ENCODE measurements at regions of chr20 and their contacts with region 1.

Region 1: DNA sequence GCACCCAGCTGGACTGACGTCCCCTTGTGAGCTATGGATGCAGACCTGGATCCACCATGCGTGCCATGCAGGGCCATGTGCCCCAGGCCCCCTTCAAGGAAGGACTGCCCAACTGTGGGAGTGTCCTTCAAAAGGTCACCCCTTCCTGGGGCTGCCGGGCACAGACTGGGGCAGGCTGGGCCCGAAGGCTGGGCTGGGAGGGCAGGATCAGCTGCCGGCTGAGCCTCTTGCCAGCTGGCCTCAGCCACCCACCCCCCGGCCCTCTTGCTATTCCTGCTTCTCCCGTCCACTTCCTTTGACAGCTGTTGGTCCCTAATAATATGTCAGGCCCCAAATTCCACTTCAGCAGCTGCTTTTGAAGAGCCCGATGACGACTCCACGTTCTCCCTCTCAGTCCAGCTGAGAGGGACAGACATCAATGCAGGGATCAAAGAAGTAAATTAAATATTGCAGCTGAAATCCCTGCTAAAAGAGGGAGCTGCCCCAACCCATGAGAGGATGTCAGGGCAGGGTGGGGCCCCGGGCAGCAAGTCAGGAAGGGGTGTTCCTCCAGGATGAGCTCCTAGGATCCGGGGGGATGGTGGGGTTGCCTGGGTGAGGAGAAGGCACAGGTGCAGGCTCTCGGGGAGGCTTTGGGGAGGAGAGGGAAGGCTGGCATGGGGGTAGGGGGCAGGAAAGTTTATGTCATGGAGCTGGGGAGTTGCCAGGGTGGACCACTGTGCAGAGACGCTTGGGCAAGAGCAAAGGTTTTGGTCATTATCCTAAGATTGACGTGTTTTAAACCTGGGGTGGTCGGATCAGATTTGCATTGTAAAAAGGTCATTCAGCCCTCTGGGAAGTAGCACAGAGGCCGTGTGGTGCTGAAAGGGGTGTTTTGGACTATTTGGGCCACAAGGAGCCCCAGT is 185.0 kb downstream of the ANKRD60 start:
- DNase-seq: no peak
- ATAC-seq: no peak
- H3K4me3 ChIP-seq: no peak overlapping the region
- H3K27ac ChIP-seq: no peak overlapping the region
- H3K4me1 ChIP-seq: no peaks in the 10 kb centered on the region
- CTCF ChIP-seq: no peak
- EP300 ChIP-seq: no peak
- POLR2A ChIP-seq: no peak
- RAD21 ChIP-seq: no peak

Region 2: DNA sequence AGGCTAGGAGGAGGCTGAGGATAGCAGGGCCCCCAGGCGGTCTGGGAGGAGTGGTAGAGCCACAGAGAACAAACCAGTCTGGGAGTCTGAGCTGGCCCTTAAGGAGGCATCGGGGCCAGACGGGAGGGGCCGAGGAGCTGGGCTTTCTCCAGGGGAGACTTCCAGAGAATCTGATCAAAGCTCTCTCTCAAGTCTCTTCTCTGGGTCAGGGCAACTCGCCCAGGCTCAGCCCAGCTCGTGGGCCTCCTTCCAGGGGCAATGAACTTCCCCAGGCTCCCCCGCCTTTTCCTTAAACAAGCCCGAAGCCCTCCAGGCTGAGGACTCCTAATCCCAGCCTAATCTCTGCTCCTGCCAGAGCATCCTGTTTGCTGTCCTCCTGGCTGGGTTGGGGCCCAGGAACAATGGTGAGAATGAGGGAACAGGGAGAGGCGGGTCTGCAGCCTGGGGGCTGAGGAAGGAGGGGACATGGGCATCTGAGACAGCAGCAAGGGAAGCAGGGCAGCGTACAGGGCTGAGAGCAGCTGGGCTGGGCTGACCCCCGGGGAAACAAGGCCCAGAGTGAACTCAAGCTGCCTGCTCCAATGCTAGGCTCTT is 11.4 kb after region 1 on chr20:
- CTCF ChIA-PET with region 1: interaction called, 10 read pairs
- POLR2A ChIA-PET with region 1: no interaction called
- DNase-seq: no peak
- ATAC-seq: no peak
- H3K4me3 ChIP-seq: no peak overlapping the region
- H3K27ac ChIP-seq: peak overlapping the region in 1 of 2 experiments; percentile 17; a peak in 1 of 6 replicates
- H3K4me1 ChIP-seq: no peaks in the 10 kb centered on the region
- CTCF ChIP-seq: no peak
- EP300 ChIP-seq: no peak
- POLR2A ChIP-seq: no peak
- RAD21 ChIP-seq: no peak

Region 3: GRCh38 chr20:58065508-58066361 is 22.2 kb after region 1 on chr20:
- CTCF ChIA-PET with region 1: no interaction called
- POLR2A ChIA-PET with region 1: no interaction called
- DNase-seq: no peak
- ATAC-seq: peak; percentile 53 to 63; a peak in 4 of 6 replicates
- H3K4me3 ChIP-seq: no peak overlapping the region
- H3K27ac ChIP-seq: peak overlapping the region in 1 of 2 experiments; percentile 55; a peak in 2 of 6 replicates
- H3K4me1 ChIP-seq: peaks cover 12% of the 10 kb centered on the region
- CTCF ChIP-seq: no peak
- EP300 ChIP-seq: no peak
- POLR2A ChIP-seq: no peak
- RAD21 ChIP-seq: no peak

Region 4: GRCh38 chr20:58202044-58202443 is 158.6 kb after region 1 on chr20:
- CTCF ChIA-PET with region 1: no interaction called
- POLR2A ChIA-PET with region 1: no interaction called
- DNase-seq: no peak
- ATAC-seq: no peak
- H3K4me3 ChIP-seq: no peak overlapping the region
- H3K27ac ChIP-seq: no peak overlapping the region
- H3K4me1 ChIP-seq: no peaks in the 10 kb centered on the region
- CTCF ChIP-seq: no peak
- EP300 ChIP-seq: no peak
- POLR2A ChIP-seq: no peak
- RAD21 ChIP-seq: no peak

Measured in A549 (cell line).